Ovary (tissue), 10 donors: ENCODE measurements at regions of chr2 and their contacts with region 1.

Region 1: DNA sequence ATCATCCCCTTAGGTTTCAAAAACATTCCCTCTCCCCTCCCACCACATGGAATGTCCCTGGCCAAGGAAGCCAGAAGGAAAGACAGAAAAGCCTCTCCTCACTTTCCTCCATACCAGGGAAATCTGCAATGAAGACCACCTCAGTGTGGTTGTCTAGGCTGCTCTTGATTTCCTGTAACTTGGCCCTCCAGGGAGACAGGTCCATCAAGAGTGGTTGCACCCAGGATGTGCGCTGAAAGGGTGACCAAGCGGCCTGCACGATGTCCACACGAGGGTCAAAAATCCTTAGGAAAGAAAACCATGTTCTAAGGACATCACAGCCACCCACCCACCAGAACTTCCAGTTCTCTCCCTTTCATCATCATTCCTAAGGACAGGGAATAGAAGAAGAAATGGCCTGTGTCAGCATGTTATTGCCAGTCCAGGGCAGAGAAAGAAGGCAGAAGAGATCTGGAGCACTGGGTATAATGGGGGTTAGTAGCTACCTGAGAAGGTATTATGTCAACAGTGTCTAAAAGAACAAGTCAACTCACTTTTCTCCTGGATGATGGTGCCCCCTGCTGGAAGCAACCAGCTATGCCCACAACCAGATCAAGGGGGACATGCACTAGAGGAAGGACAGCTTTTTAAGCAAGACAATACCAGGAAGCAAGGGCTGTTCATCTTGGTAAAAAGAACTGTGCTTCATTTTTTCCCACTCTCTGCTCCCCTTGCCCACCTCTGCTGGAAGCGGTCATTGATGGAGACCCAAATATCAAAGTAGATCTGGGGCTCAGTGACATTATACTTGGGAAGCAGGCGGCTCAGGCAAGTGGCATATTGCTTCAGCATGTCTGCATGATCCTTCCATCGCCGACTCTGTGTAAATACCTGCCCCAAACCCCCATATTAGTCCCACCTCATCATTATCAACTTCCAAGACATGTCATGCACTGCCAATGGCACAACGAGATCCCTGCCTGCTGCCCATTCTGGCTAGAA is 9.3 kb downstream of the GGCX start:
- DNase-seq: peak; percentile 69 to 88 (median 82)
- H3K4me3 ChIP-seq: no peak overlapping the region
- H3K27ac ChIP-seq: no peak overlapping the region
- H3K4me1 ChIP-seq: no peaks in the 10 kb centered on the region
- H3K27me3 ChIP-seq: no peaks in the 10 kb centered on the region
- CTCF ChIP-seq: peak; percentile 65 to 95 (median 89)
- EP300 ChIP-seq: no peak
- POLR2A ChIP-seq: no peak

Region 2: GRCh38 chr2:83615511-83615910 is 1936.5 kb before region 1 on chr2:
- intact Hi-C with region 1: no loop called
- DNase-seq: no peak
- H3K4me3 ChIP-seq: no peak overlapping the region
- H3K27ac ChIP-seq: no peak overlapping the region
- H3K4me1 ChIP-seq: no peaks in the 10 kb centered on the region
- H3K27me3 ChIP-seq: no peaks in the 10 kb centered on the region
- CTCF ChIP-seq: no peak
- EP300 ChIP-seq: no peak
- POLR2A ChIP-seq: no peak

Region 3: GRCh38 chr2:84603911-84604310 is 948.1 kb before region 1 on chr2:
- intact Hi-C with region 1: no loop called
- DNase-seq: no peak
- H3K4me3 ChIP-seq: no peak overlapping the region
- H3K27ac ChIP-seq: no peak overlapping the region
- H3K4me1 ChIP-seq: no peaks in the 10 kb centered on the region
- H3K27me3 ChIP-seq: no peaks in the 10 kb centered on the region
- CTCF ChIP-seq: no peak
- EP300 ChIP-seq: no peak
- POLR2A ChIP-seq: no peak

Region 4: DNA sequence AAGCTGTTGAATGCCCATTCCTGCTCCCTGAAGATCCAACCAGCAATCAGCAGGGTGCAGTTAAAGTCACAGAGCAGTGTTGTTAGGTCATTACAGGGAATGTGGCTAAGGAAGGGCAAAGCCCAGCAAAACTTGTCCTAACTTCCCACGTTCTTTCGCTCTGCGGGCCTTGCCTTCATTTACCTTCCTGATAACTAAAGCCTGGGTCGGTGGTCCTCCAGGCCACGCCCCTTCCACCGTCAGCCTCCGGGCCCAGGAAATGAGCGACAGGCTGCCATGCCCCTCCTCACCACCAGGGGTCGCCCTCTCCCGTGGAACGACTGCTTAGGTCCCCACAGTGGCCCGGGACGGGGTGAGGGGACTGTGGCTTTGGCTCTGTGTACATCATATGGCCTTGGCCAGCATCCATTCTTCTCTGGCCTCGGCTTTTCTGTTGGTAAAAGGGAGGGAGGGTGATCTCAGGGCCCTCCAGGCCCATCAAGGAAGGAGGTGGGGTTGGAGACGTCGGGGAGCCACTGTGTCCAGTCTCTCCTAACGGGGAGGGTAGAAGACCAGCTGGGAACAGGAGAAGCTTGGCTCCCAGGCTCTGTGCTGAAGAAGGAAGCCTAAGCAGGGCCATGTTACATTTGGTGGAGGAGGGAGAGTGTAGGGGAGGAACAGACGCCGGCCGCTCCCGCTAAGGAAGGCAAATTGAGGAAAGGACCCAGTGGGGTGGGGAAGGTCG is 131.3 kb before region 1 on chr2:
- intact Hi-C with region 1: loop called (anchors 1 to 5 kb)
- DNase-seq: peak; percentile 84 to 93 (median 89)
- H3K4me3 ChIP-seq: no peak overlapping the region
- H3K27ac ChIP-seq: peak overlapping the region; percentile 58 to 68
- H3K4me1 ChIP-seq: peaks cover 5% of the 10 kb centered on the region
- H3K27me3 ChIP-seq: no peaks in the 10 kb centered on the region
- CTCF ChIP-seq: peak; percentile 100
- EP300 ChIP-seq: no peak
- POLR2A ChIP-seq: peak; percentile 45

Region 5: GRCh38 chr2:85445316-85446295 is 106.4 kb before region 1 on chr2:
- intact Hi-C with region 1: no loop called
- DNase-seq: peak; percentile 69 to 81 (median 80)
- H3K4me3 ChIP-seq: no peak overlapping the region
- H3K27ac ChIP-seq: peak overlapping the region; percentile 28 to 69
- H3K4me1 ChIP-seq: peaks cover 16% of the 10 kb centered on the region
- H3K27me3 ChIP-seq: no peaks in the 10 kb centered on the region
- CTCF ChIP-seq: no peak
- EP300 ChIP-seq: no peak
- POLR2A ChIP-seq: no peak